ENCODE measurements at regions of chr3 and their contacts with region 1.

Region 1: DNA sequence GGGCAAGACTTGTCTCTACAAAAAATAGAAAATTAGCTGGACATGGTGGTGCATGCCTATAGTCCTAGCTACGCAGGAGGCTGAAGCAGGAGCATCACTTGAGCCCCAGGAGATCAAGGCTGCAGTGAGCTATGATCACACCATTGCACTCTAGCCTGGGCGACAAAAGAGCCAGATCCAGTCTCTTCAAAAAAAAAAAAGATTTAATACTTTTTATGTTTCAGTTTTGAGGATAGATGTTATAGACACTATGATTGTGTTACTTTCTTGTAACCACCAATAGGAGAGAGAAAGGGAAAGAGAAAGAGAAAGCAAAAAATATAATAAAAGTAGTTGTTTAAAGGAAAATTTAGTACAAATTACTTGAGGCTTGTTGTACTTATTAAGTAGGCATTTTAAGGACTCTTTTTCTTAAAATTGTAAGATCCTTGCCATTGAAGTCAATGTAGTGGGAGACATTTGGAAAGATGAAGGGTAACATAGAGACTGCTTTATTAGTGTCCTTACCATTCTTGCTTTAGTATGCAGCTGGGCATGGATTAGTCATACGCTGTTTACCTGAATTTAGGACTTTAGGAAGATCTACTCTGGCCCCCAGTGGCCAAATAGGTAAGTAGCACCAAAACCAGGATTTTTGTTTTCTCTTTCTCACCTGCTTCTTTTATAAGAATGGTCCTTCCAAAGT is 35.1 kb upstream of the ZDHHC23 start:
- DNase-seq: peak; percentile 77
- ATAC-seq: peak; percentile 87
- H3K4me3 ChIP-seq: no peak overlapping the region
- H3K27ac ChIP-seq: no peak overlapping the region
- H3K4me1 ChIP-seq: 0 out of 2 replicates have a peak, but pooled peaks cover 2% of the 10 kb centered on the region
- H3K27me3 ChIP-seq: no peaks in the 10 kb centered on the region
- CTCF ChIP-seq: peak; percentile 68
- POLR2A ChIP-seq: no peak
- RAD21 ChIP-seq: peak; percentile 74

Region 2: DNA sequence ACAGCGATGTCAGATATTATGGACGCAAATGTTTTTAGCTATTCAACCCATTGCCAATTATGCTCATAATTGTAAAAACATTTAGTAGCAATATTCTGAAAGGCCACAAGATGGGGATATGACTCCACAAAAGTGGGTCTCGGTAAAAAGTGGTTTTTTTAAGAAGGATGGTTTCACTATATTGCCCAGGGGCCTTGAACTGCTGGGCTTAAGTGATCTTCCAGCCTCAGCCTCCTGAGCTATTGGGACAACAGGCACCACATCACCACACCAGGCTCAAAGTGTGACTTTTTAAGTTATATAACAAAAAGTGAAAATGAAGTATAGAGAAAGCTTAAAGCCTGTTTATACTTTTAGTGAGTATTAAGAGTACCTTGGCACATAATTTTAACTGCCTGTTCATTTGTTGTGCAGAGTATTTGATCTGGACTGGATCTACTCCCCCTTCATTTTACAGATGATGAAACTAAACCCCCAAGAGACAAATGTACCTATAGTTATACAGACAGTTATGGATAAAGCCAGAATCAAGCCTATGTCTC is 176.1 kb before region 1 on chr3:
- CTCF ChIA-PET with region 1: interaction called, 6 read pairs
- POLR2A ChIA-PET with region 1: no interaction called
- dilution Hi-C with region 1: no loop called
- in situ Hi-C with region 1: loop called (anchors 10 kb)
- intact Hi-C with region 1: loop called (anchors 2 kb)
- DNase-seq: peak; percentile 73
- ATAC-seq: peak; percentile 83
- H3K4me3 ChIP-seq: no peak overlapping the region
- H3K27ac ChIP-seq: no peak overlapping the region
- H3K4me1 ChIP-seq: peaks cover 6% of the 10 kb centered on the region; the same call in 1 of the 2 replicates
- H3K27me3 ChIP-seq: no peaks in the 10 kb centered on the region
- CTCF ChIP-seq: peak; percentile 79
- POLR2A ChIP-seq: peak; percentile 27; the same call in 1 of the 2 replicates
- RAD21 ChIP-seq: peak; percentile 84

Region 3: DNA sequence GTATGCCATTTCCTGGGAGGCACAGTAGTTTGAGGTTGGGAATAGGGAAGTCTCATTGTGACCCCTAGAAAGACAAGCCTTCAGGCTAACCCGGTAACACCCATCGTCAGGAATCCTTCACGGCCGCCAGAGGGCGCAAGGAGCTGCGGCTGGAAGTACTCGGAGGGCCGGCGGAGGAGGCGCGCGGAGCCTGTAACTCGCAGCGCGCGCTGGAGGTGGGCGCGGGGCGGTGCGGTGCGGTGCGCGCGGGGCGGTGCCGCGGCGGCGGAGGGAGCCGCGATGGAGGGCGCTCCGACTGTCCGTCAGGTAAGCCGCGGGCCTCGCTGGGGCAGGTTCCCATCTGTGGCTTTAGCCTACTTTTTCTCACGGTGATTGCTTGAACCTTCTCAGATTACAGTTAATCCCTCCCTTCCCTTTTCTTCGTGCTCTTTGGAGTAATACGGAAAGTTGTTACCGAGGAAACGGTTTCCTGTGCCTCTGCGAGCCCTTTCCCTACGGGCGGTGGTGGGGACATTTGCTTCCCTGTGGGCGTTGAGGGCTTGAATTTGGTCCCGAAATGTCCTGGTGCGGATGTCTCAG is 74.0 kb before region 1 on chr3 and contains the start of gene GRAMD1C:
- CTCF ChIA-PET with region 1: interaction called, 4 read pairs
- POLR2A ChIA-PET with region 1: no interaction called
- dilution Hi-C with region 1: no loop called
- in situ Hi-C with region 1: loop called (anchors 5 kb)
- intact Hi-C with region 1: loop called (anchors 1 kb)
- DNase-seq: peak; percentile 88
- ATAC-seq: peak; percentile 98
- H3K4me3 ChIP-seq: peak within 1 kb of the TSS; percentile 95
- H3K27ac ChIP-seq: peak within 1 kb of the TSS; percentile 59; the same call in 1 of the 2 replicates
- H3K4me1 ChIP-seq: no peaks in the 10 kb centered on the region
- H3K27me3 ChIP-seq: no peaks in the 10 kb centered on the region
- CTCF ChIP-seq: peak; percentile 92
- POLR2A ChIP-seq: 0 out of 2 replicates have a peak, but pooled peaks have one; percentile 25
- RAD21 ChIP-seq: peak; percentile 75
- total RNA-seq, gene GRAMD1C: 5.0 and 9.4 TPM in 2 replicates

Region 4: DNA sequence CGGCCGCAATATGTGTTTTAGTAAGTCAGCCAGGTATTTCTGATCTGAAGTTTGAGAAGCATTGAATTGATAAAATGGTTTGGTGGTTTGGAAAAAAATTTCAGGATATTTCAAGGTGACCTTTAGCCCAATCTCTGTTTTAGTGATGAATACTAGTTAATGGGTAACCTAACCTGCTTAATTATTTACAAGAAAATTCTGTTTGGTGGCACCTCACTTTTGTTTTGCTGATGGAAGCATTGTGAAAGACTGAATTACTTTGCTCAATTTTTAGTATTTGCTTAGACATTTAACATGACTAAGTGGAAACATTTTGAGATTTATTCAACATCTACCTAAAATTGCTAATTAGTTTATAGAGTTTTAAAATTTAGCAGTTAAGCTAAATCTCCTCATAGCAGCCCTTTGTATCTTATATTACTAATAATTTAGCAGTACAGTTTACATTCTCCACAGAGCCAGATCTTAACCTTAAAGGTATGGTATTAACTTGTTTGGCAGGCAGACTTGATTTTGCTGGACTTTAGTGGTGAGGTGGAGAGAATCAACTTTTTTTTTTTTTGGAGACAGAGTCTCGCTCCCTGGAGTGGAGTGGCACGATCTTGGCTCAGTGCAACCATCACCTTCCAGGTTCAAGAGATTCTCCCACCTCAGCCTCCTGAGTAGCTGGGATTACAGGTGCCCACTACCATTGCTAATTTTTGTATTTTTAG is 38.7 kb before region 1 on chr3:
- CTCF ChIA-PET with region 1: no interaction called
- POLR2A ChIA-PET with region 1: no interaction called
- dilution Hi-C with region 1: no loop called
- in situ Hi-C with region 1: no loop called
- intact Hi-C with region 1: loop called (anchors 1 kb)
- DNase-seq: no peak
- ATAC-seq: no peak
- H3K4me3 ChIP-seq: no peak overlapping the region
- H3K27ac ChIP-seq: no peak overlapping the region
- H3K4me1 ChIP-seq: no peaks in the 10 kb centered on the region
- H3K27me3 ChIP-seq: no peaks in the 10 kb centered on the region
- CTCF ChIP-seq: no peak
- POLR2A ChIP-seq: no peak
- RAD21 ChIP-seq: no peak

Region 5: DNA sequence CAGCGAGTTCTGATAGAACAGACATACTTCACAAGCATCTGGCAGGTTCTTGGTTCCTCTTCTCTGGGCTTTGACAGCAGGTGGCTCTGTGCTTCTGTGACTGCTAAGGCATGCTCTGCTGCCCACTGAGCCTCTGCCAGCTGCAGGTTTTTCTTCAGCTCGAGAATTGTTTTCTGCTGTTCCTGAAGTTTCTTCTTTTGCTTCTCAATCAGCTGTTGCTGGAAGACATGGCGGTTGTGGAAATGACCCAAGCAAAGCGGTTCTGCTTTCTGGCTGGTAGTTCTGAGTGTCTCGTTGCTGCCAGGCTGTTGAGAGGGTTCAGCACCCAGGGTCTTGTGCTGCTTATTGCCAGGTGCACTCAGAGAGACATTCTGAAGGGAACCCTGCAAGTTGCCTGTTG is 92.8 kb after region 1 on chr3:
- CTCF ChIA-PET with region 1: no interaction called
- POLR2A ChIA-PET with region 1: no interaction called
- dilution Hi-C with region 1: no loop called
- in situ Hi-C with region 1: no loop called
- intact Hi-C with region 1: no loop called
- DNase-seq: no peak
- ATAC-seq: no peak
- H3K4me3 ChIP-seq: no peak overlapping the region
- H3K27ac ChIP-seq: no peak overlapping the region
- H3K4me1 ChIP-seq: no peaks in the 10 kb centered on the region
- H3K27me3 ChIP-seq: no peaks in the 10 kb centered on the region
- CTCF ChIP-seq: no peak
- POLR2A ChIP-seq: no peak
- RAD21 ChIP-seq: no peak

Measured in IMR-90 (cell line).